Left colon (tissue), 2 donors: ENCODE measurements at regions of chr20 and their contacts with region 1.

Region 1: DNA sequence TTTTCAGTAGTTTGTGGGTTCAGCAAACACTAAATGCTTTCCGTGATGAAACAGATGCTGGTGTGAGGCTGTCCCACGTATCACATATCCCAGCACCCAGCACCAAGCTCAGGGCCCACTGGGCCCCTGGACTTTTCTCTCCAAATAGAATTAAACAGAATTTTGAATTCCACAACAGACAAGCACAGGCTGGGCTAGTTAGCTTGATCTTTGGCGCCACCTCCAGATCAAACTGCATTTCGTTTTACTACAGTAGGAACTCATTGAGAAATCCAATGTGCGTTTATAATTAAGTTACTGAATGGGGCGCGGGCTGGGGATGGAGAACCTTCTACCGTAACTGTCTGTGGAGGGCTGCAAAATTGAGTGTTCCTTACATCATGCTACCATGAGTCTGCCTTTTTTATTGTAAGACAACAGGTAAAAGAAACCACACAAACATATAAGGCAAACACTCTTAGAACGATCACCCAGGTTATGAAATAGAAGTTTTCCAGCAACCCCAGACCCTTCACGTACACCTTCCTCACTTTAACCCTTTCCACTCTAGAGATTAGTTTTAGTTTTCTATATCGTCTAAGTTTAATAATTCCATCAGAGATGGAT is 107.8 kb downstream of the ZFP64 start:
- DNase-seq: peak in 1 of 2 donors; percentile 58
- ATAC-seq: peak; percentile 65

Region 2: DNA sequence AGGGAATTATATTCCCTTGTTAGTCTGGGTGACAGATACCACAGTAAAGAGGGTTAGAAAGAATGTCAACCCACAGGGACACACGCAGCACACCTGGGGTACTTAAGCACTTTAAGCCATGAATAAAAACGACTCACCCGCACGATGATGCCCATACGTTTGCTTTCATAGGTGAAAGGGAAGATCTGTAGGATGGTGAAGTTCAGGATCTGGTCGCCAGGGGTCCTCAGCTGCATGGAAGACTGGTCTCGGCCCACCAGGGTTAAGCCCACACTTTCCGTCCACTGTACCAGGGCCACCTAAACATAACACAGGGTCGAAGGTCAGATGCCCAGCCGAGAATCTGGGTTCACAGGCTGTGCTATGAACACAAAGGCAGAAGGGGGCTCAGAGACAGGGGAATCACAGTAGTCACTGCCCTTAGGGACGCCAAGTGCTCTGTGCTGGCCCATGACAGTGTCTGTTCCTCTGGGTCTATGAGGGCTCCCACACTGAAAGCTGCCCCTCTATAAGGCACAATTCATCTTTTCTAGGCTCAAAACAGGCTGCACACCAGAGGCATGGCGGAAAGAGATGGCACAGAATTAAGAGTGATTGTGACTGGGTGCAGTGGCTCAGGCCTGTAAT is 444.4 kb before region 1 on chr20:
- intact Hi-C with region 1: loop called in 1 of 2 experiments (anchors 10 kb)
- DNase-seq: peak; percentile 38 to 74
- ATAC-seq: peak; percentile 70

Region 3: DNA sequence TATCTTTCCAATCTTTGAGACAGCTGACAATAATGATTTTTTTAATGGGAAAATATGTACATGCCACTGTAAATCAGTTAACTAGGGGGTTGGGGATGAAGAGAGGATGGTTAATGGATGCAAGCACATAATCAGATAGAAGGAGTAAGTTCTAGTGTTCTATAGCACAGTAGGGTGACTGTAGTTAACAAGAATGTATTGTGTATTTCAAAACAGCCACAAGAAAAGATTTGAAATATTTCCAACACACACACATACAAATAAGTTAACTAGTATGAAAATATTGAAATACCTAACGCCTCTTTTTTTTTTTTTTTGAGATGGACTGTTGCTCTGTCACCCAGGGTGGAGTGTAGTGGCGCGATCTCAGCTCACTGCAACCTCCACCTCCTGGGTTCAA is 128.0 kb before region 1 on chr20:
- intact Hi-C with region 1: no loop called
- DNase-seq: no peak
- ATAC-seq: no peak

Region 4: DNA sequence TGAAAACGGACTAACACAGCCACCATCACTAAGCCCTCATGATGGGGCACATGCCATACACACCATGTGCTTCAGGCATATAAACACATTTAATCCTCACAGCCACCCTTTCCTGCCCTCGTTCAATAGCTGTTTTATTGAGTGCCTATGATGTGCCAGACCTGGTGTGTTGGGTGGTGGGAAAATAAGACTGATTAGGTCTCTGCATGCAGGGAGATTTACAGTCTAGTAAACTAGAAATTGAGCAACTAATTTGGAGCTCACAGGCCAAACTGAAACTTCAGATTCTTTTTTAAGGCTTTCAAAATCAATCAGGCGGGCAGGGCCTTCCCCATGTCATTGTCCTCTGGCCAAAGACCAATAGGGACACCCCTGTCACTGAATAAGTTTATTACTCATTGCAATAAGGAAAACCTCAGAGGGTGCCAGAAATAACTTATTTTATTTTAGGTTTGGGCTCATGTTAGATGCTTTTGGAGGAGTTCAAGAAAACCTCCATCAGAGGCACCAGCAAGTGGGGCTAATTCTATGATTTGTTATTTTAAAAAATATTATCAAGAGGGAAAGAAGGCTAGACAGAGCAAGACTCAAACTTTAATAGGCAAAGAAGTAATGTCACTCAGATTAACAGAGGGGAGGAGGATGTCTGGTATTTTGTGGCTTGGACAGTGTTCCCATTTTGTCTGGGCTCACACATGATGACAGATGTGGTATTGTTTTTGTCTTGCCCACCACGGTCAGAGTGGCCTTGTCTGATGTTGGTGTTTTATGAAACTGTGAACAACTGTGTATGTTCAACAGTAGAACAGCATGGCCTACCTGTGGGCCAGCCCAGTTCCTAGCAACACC is 95.8 kb after region 1 on chr20:
- intact Hi-C with region 1: no loop called
- DNase-seq: no peak
- ATAC-seq: no peak